Activated T-helper 2 cell treated with anti-CD3 and anti-CD28 coated beads, Interferon-gamma antibody, Interleukin-2, Interleukin-4, amounts not matched to agents 10 μg/mL and 5 μg/mL and 100 μg/mL, durations not matched to agents 14 hours and 24 hours and 36 hours (primary cell): ENCODE measurements at regions of chr12 and their contacts with region 1.

Region 1: DNA sequence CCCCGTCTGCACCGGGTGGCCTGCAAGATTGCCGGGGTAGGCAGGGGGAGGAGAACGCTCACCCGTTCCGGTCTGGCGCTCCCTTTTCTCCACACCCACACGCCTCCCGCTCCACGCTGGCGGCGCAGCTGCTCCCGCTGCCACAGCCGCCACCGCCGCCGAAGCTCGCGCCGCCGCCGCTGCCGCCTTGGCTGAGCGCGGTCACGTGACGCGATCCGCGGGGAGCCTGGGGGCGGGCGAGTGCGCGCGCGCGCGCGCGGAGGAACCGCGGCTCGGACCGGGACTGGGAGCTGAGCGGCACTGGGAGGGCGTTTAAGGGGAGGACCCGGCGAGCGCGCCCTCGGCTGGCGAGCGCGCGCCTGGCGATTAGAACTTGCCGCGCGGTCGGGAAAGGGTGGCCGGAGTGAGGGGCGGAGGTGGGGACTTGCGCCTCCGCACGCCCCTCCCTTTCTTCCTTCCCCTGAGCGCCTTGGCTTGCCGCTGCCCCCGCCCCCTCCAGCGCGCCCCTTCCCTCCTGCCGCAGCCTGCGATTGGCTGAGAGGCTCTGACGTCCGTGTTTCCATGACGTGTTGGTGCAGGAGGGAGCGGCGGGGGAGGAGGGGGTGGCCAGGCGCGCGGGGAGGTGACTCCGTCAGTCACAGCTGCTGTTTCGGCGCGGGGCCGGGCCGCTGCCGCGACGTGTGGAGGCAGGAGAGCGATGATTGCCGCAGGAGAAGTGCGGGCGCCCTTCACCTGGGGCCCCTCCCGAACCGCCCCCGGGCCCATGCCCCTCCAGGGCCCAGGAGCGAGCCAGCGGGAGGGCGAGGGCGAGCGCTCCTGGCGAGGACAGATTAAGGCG is 738 bp upstream of the ATP2B1 start:
- DNase-seq: peak; percentile 97
- H3K4me3 Mint-ChIP-seq: peak overlapping the region; percentile 82
- H3K27ac Mint-ChIP-seq: peak overlapping the region; percentile 83
- H3K4me1 Mint-ChIP-seq: peaks cover 35% of the 10 kb centered on the region
- H3K27me3 Mint-ChIP-seq: peaks cover 47% of the 10 kb centered on the region

Region 2: DNA sequence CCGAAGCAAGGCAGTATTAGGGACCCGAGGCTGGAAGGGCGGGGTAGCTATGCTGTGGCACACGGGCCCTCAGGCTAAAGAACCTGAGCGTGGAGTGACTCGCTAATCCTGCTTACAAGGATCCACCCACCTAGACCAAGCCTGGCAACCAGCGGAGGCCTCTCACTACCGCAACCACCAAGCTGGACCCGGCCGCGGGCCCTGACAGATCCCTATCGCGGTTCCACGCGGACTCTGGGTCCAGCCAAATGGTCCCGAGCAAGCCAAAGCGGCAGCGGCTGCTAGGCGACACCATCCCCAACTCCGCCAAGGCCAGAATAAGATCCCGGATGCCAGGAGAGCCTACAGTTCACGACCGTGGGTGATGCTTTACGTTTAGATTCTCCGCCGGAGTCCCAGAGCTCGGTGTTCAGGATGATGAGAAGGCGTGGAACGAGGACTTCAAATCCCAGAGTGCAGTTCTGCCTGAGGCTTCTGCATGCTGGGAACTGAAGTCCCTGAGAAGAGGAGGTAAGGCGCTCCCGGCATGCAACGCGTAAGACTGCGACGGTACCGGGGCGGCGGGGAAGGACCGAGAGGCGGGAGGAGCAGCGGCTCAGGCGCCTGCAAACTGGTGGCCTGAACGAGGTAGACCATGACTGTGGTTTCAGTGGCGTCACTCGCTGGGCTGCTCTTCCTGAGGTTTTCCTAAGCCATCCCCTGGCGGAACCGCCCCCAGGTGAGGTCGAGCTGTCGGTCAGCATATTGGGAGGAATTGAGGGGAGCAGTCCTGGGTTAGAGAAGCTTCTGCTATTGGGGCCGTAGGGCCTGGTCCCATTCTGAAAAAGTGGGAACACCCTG is 1567.4 kb before region 1 on chr12 and contains the starts of genes CEP290 and TMTC3:
- intact Hi-C with region 1: loop called (anchors 1 kb)
- DNase-seq: peak; percentile 93
- H3K4me3 Mint-ChIP-seq: peak within 1 kb of the TSS; percentile 94
- H3K27ac Mint-ChIP-seq: peak within 1 kb of the TSS; percentile 91
- H3K4me1 Mint-ChIP-seq: peaks cover 34% of the 10 kb centered on the region
- H3K27me3 Mint-ChIP-seq: no peaks in the 10 kb centered on the region
- total RNA-seq, gene CEP290: 16.0 TPM in 2 replicates
- total RNA-seq, gene TMTC3: 7.2 and 8.1 TPM in 2 replicates

Region 3: GRCh38 chr12:89470741-89471509 is 238.5 kb before region 1 on chr12:
- intact Hi-C with region 1: loop called (anchors 5 kb)
- DNase-seq: no peak
- H3K4me3 Mint-ChIP-seq: no peak overlapping the region
- H3K27ac Mint-ChIP-seq: peak overlapping the region; percentile 63
- H3K4me1 Mint-ChIP-seq: peaks cover 65% of the 10 kb centered on the region
- H3K27me3 Mint-ChIP-seq: no peaks in the 10 kb centered on the region

Region 4: GRCh38 chr12:89618107-89618862 is 91.1 kb before region 1 on chr12:
- intact Hi-C with region 1: loop called (anchors 10 kb)
- DNase-seq: no peak
- H3K4me3 Mint-ChIP-seq: no peak overlapping the region
- H3K27ac Mint-ChIP-seq: no peak overlapping the region
- H3K4me1 Mint-ChIP-seq: peaks cover 1% of the 10 kb centered on the region
- H3K27me3 Mint-ChIP-seq: no peaks in the 10 kb centered on the region

Region 5: DNA sequence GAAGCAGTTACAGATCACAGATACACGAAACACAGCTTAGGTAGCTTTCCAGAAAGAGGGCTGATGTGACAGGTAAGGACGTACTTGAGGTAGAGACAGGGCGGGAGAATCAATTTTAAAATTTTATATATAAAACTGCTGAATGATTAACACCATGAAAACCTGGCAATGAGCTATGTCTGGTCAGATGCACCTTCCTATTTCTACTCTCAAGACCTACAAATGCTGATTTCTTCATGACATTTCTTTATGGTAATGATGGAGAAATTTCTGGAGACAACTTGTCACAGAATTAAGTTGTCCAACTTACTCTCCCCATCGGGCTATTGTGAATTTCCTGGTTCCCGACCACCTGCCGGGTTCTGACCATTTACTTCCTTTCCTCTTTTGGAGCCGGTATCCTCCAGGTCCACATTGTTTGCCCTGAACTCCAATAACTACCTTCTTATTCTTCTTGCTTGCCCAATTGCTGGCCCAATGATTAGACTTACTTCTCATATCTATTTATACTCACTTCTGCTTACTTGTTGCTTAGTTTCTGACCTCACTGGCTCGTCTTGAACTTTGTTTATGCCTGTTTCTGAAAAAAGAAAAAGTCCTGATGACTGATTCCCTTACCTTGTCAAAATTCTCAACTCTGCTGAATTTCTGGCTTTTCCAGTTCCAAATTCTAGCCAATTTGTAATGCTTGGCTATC is 12.1 kb after region 1 on chr12:
- intact Hi-C with region 1: no loop called
- DNase-seq: no peak
- H3K4me3 Mint-ChIP-seq: no peak overlapping the region
- H3K27ac Mint-ChIP-seq: no peak overlapping the region
- H3K4me1 Mint-ChIP-seq: no peaks in the 10 kb centered on the region
- H3K27me3 Mint-ChIP-seq: peaks cover 4% of the 10 kb centered on the region

Region 6: GRCh38 chr12:89768586-89769486 is 59.5 kb after region 1 on chr12:
- intact Hi-C with region 1: loop called (anchors 1 kb)
- DNase-seq: no peak
- H3K4me3 Mint-ChIP-seq: no peak overlapping the region
- H3K27ac Mint-ChIP-seq: peak overlapping the region; percentile 49
- H3K4me1 Mint-ChIP-seq: peaks cover 28% of the 10 kb centered on the region
- H3K27me3 Mint-ChIP-seq: no peaks in the 10 kb centered on the region

Region 7: GRCh38 chr12:90091021-90091651 is 381.8 kb after region 1 on chr12:
- intact Hi-C with region 1: loop called (anchors 1 kb)
- DNase-seq: no peak
- H3K4me3 Mint-ChIP-seq: no peak overlapping the region
- H3K27ac Mint-ChIP-seq: no peak overlapping the region
- H3K4me1 Mint-ChIP-seq: peaks cover 13% of the 10 kb centered on the region
- H3K27me3 Mint-ChIP-seq: peaks cover 4% of the 10 kb centered on the region

Region 8: DNA sequence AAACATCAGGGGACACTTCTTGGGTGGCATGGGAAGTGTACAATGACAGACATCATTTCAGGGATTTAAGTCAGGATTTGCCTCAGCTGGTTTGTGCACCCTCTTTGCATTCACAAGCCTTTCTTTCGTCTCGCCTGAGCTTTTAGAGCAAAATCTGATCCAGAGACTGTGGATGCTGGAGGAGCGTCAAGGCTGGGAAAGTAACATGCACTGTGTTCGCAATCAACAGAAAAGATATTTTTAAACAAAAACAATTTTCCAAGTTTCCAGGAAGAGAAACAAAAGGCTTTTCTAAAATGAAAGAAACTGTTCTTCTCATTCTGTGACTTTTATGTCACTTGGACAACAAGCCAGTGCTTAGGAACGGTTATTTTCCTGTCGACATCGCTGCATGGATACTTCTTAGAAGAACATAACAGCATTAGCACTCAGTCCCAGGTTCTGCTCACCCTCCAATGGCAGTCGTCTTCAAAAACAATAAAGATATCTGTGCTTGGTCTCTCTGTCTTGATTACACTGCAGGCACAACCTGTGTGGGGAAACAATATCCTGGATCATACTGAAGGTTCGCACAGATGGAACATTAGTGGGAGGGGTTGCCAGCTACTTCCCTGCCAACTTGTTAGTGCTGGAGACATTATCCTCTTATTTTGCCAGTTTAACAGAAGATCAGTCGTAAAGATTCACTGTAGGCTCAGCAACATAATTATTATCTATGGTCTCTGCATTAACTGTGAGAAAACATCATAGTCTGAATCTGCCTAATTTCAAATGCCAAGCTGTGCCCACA is 402.6 kb after region 1 on chr12:
- intact Hi-C with region 1: no loop called
- DNase-seq: no peak
- H3K4me3 Mint-ChIP-seq: no peak overlapping the region
- H3K27ac Mint-ChIP-seq: no peak overlapping the region
- H3K4me1 Mint-ChIP-seq: no peaks in the 10 kb centered on the region
- H3K27me3 Mint-ChIP-seq: no peaks in the 10 kb centered on the region